ENCODE measurements at regions of chr9 and their contacts with region 1.

Region 1: DNA sequence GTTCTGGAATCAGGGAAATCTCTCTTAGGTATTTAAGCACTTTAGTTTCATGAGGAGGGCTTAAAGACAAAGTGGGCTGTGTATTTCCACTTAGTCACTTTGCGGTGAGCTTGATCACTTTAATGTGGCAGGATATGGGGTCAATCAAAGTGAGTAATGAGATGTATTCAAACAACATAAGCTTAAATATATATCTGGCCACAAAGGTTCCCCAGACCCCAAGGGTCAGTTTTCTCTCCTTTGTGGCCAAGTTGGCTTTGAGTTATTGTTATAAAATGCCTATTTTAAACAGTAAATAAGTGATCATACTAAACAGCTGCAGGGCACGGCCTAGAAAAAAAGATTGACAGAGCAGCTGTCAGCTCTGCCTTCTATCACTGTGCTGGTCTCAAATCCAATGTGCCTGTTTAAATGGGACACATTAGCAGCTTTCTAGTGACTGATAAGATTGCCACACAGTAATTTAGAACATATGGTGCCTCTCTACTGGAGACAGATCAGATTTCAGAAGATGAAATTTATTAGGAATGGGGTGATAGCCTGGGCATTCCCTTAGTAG is 363.9 kb downstream of the AGTPBP1 start:
- DNase-seq: no peak
- H3K4me3 ChIP-seq: no peak overlapping the region
- H3K27ac ChIP-seq: no peak overlapping the region
- H3K4me1 ChIP-seq: no peaks in the 10 kb centered on the region
- H3K27me3 ChIP-seq: no peaks in the 10 kb centered on the region
- CTCF ChIP-seq: no peak

Region 2: GRCh38 chr9:84471816-84472215 is 906.0 kb before region 1 on chr9:
- intact Hi-C with region 1: loop called (anchors 10 kb)
- DNase-seq: no peak
- H3K4me3 ChIP-seq: no peak overlapping the region
- H3K27ac ChIP-seq: no peak overlapping the region
- H3K4me1 ChIP-seq: no peaks in the 10 kb centered on the region
- H3K27me3 ChIP-seq: no peaks in the 10 kb centered on the region
- CTCF ChIP-seq: no peak

Measured in colonic mucosa (tissue), 4 donors.